ENCODE measurements at regions of chr13 and their contacts with region 1.

Region 1: GRCh38 chr13:57624565-57625435 is 6.7 kb upstream of the PCDH17 start:
- DNase-seq: peak; percentile 34
- H3K4me3 ChIP-seq: no peak overlapping the region
- H3K27ac ChIP-seq: no peak overlapping the region
- H3K4me1 ChIP-seq: peaks cover 1% of the 10 kb centered on the region
- H3K27me3 ChIP-seq: peaks cover under 1% of the 10 kb centered on the region
- CTCF ChIP-seq: peak; percentile 76 to 79

Region 2: GRCh38 chr13:59000770-59001169 is 1376.0 kb after region 1 on chr13:
- CTCF ChIA-PET with region 1: interaction called, 10 read pairs
- dilution Hi-C with region 1: no loop called
- in situ Hi-C with region 1: no loop called
- intact Hi-C with region 1: no loop called
- DNase-seq: no peak
- H3K4me3 ChIP-seq: no peak overlapping the region
- H3K27ac ChIP-seq: no peak overlapping the region
- H3K4me1 ChIP-seq: no peaks in the 10 kb centered on the region
- H3K27me3 ChIP-seq: no peaks in the 10 kb centered on the region
- CTCF ChIP-seq: no peak

Region 3: GRCh38 chr13:59176775-59177174 is 1552.0 kb after region 1 on chr13:
- CTCF ChIA-PET with region 1: no interaction called
- dilution Hi-C with region 1: no loop called
- in situ Hi-C with region 1: no loop called
- intact Hi-C with region 1: loop called (anchors 5 kb)
- DNase-seq: no peak
- H3K4me3 ChIP-seq: no peak overlapping the region
- H3K27ac ChIP-seq: no peak overlapping the region
- H3K4me1 ChIP-seq: no peaks in the 10 kb centered on the region
- H3K27me3 ChIP-seq: no peaks in the 10 kb centered on the region
- CTCF ChIP-seq: peak in 1 of 2 donors; percentile 20

Region 4: GRCh38 chr13:59261928-59262488 is 1637.2 kb after region 1 on chr13:
- CTCF ChIA-PET with region 1: no interaction called
- dilution Hi-C with region 1: no loop called
- in situ Hi-C with region 1: no loop called
- intact Hi-C with region 1: loop called (anchors 5 kb)
- DNase-seq: no peak
- H3K4me3 ChIP-seq: no peak overlapping the region
- H3K27ac ChIP-seq: no peak overlapping the region
- H3K4me1 ChIP-seq: no peaks in the 10 kb centered on the region
- H3K27me3 ChIP-seq: no peaks in the 10 kb centered on the region
- CTCF ChIP-seq: peak in 1 of 2 donors; percentile 29